G401 (cell line): ENCODE measurements at regions of chr22 and their contacts with region 1.

Region 1: GRCh38 chr22:39405346-39406085 is 5.9 kb downstream of the TAB1 start:
- DNase-seq: peak; percentile 73

Region 2: GRCh38 chr22:39319270-39320022 is 86.1 kb before region 1 on chr22 and contains the start of gene RPL3:
- in situ Hi-C with region 1: loop called (anchors 5 kb)
- DNase-seq: peak; percentile 98
- total RNA-seq, gene RPL3: 6,349 and 7,167 TPM in 2 replicates

Region 3: GRCh38 chr22:39349967-39350726 is 55.4 kb before region 1 on chr22 and contains the start of gene SYNGR1:
- in situ Hi-C with region 1: loop called (anchors 10 kb)
- DNase-seq: peak; percentile 61
- total RNA-seq, gene SYNGR1: 48.0 and 67.0 TPM in 2 replicates